IMR-90 (cell line): ENCODE measurements at regions of chr4 and their contacts with region 1.

Region 1: GRCh38 chr4:130985371-130985770 is 1889.4 kb downstream of the C4orf33 start:
- DNase-seq: no peak
- ATAC-seq: no peak
- H3K4me3 ChIP-seq: no peak overlapping the region
- H3K27ac ChIP-seq: no peak overlapping the region
- H3K4me1 ChIP-seq: no peaks in the 10 kb centered on the region
- H3K27me3 ChIP-seq: no peaks in the 10 kb centered on the region
- CTCF ChIP-seq: no peak
- POLR2A ChIP-seq: no peak
- RAD21 ChIP-seq: no peak

Region 2: DNA sequence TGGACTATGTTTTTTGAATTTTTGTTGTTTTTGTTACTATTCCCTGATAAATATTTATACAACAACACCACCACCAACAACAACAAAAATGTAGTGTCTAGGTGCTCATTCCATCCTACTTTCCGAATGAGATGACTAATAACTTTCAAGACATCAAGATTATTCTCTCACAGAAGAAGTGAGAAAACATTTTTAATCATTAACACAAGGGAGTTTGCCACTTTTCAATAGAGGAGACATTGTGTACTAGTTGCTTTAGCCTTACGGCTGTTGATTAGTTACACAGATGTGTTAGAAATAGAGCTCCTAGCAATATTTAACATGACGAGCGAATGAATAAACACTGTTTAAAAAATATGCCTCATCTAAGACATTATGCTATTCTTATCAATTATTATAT is 990.7 kb before region 1 on chr4:
- CTCF ChIA-PET with region 1: no interaction called
- POLR2A ChIA-PET with region 1: no interaction called
- dilution Hi-C with region 1: no loop called
- in situ Hi-C with region 1: no loop called
- intact Hi-C with region 1: no loop called
- DNase-seq: no peak
- ATAC-seq: no peak
- H3K4me3 ChIP-seq: no peak overlapping the region
- H3K27ac ChIP-seq: no peak overlapping the region
- H3K4me1 ChIP-seq: no peaks in the 10 kb centered on the region
- H3K27me3 ChIP-seq: no peaks in the 10 kb centered on the region
- CTCF ChIP-seq: no peak
- POLR2A ChIP-seq: no peak
- RAD21 ChIP-seq: no peak

Region 3: GRCh38 chr4:130698251-130698650 is 287.1 kb before region 1 on chr4:
- CTCF ChIA-PET with region 1: no interaction called
- POLR2A ChIA-PET with region 1: no interaction called
- dilution Hi-C with region 1: no loop called
- in situ Hi-C with region 1: no loop called
- intact Hi-C with region 1: no loop called
- DNase-seq: no peak
- ATAC-seq: no peak
- H3K4me3 ChIP-seq: no peak overlapping the region
- H3K27ac ChIP-seq: no peak overlapping the region
- H3K4me1 ChIP-seq: no peaks in the 10 kb centered on the region
- H3K27me3 ChIP-seq: no peaks in the 10 kb centered on the region
- CTCF ChIP-seq: no peak
- POLR2A ChIP-seq: no peak
- RAD21 ChIP-seq: no peak

Region 4: GRCh38 chr4:131632877-131633276 is 647.5 kb after region 1 on chr4:
- CTCF ChIA-PET with region 1: no interaction called
- POLR2A ChIA-PET with region 1: no interaction called
- dilution Hi-C with region 1: no loop called
- in situ Hi-C with region 1: no loop called
- intact Hi-C with region 1: loop called (anchors 5 kb)
- DNase-seq: no peak
- ATAC-seq: no peak
- H3K4me3 ChIP-seq: no peak overlapping the region
- H3K27ac ChIP-seq: no peak overlapping the region
- H3K4me1 ChIP-seq: no peaks in the 10 kb centered on the region
- H3K27me3 ChIP-seq: no peaks in the 10 kb centered on the region
- CTCF ChIP-seq: no peak
- POLR2A ChIP-seq: no peak
- RAD21 ChIP-seq: no peak